ENCODE measurements at regions of chr17 and their contacts with region 1.

Region 1: GRCh38 chr17:57243171-57243948 is 13.0 kb upstream of the MSI2 start:
- DNase-seq: peak; percentile 74
- ATAC-seq: peak; percentile 87

Region 2: DNA sequence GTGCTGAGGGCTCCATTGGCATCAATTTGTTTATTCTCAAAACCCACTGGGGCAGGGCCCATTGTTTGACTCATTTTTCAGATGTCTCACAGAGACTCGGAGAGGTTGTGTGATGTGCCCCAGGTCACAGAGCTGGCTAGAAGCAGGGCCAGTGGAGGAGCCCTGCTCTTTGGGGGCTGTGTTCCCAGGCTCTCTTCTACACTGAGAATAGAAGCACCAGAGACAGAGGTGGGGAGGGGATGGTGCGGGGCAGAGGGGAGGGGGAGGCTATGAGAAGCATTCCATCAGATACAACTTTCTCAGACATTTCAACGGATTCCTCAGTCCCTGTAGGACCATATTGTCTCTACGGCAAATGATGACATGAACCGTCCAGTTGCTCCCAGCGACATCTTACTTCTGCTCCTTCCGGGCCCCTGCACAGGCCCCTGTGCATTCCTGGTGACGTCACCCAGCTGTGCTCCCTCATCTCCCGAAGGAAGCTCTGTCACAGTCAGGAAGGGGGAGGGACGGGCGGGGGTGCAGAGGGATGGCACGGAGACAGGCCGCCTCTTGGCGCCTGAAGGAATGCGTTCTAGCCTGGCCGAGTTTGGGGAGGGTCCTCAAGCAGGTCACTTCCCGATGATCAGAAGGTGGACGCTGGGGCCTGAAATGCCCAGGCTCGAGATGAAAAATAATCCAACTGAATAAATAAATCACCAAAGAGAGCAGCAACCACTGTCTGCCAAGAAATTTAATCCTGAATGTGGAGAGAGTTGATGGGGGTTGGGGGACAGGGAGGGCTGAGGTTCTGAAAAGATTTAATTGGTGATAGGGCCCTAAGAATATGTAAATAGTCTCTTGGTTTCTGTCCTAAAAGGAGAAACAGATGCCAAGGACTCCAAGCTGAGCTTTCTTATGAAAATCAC is 535.8 kb before region 1 on chr17:
- intact Hi-C with region 1: no loop called
- DNase-seq: no peak
- ATAC-seq: no peak

Region 3: DNA sequence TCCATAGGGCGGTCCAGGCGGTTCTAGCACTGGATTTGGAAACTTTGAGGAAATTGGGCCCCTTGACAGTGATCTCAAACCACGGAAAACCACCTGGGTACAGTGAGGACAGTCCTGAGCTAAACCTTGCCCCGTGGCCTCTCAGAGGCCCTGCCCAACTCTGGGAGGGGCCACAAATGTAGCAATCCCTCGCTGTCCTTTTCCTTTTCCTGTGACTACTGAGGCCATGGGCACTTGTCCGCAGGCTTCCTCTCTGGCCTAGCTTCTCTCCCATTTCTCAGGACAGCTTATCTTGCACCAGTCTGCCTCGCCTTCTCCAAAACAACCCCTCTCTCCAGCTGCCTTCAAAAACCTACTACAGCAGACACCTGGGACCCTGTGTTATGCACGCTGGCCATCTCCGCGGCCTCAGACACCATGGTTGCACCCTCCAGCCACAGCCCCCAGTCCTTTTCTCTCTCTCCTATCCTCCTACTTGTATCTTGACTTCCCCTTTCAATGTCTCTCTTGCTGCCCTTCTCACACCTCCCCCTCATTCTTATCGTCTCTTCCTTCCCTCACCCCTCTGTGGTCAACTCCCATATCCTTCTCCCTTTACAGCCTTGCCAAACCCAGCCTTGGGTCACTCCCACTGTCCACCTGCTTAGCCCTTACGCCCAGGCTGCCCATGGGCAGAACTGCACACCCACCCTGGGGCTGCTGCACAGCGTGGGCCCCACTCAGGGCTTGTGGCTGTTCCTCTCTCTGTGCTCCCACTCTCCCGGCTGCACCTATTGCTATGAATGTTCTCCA is 257.8 kb before region 1 on chr17:
- intact Hi-C with region 1: no loop called
- DNase-seq: no peak
- ATAC-seq: peak; percentile 69

Region 4: GRCh38 chr17:57004944-57005579 is 238.3 kb before region 1 on chr17:
- intact Hi-C with region 1: no loop called
- DNase-seq: no peak
- ATAC-seq: peak; percentile 69

Region 5: GRCh38 chr17:57604771-57605674 is 361.7 kb after region 1 on chr17:
- intact Hi-C with region 1: no loop called
- DNase-seq: peak; percentile 72
- ATAC-seq: peak; percentile 82

Region 6: DNA sequence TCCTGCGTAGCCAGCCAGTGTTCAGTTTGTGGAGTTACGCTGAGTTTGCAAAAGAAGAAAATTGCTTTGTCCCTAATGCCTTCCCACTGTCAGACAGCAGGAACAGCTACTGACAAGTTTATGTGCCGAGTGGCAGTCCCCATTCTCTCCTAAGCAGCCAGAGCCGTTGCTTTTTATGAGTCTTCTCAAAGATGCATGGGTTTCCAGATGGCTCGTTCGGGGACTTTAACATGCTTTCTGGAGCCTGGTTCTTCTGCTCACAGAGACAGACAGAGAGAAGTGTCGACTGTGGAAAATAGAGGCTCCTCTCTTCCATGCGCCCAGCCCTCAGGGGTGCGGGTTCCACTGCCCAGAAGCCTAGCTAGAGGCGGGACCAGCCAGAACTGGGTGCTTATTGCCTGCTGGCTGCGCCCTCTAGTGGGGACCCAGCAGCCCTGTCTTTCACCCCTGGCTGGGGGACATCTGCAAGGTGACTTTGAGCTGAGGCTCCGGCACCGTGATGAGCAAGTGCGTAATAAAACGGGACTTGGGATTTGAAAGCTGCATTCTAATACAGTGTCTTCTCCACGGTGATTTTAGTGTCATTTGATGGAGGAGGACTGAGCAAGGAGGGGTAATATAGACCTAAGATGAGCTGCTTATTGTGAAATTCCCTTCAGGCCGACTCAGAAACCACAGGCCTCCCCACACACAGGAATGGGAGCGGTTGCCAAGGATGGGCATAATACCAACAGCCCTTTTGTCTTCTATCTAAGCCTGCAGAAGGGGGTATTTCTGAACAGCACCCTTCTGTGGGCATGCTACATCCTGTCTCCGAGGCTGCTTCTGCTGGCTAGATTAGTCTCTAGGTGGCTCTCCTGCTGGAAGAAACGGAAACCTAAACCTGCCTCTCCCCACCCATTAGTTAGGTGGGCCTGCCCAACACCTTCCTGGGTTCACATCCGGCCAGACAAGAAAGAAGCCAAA is 428.6 kb after region 1 on chr17:
- intact Hi-C with region 1: loop called (anchors 5 kb)
- DNase-seq: peak; percentile 84
- ATAC-seq: peak; percentile 96

Measured in Right ventricle myocardium superior (tissue), 1 donor.